Activated CD4-positive, alpha-beta T cell treated with anti-CD3 and anti-CD28 coated beads for 36 hours (primary cell): ENCODE measurements at regions of chr1 and their contacts with region 1.

Region 1: DNA sequence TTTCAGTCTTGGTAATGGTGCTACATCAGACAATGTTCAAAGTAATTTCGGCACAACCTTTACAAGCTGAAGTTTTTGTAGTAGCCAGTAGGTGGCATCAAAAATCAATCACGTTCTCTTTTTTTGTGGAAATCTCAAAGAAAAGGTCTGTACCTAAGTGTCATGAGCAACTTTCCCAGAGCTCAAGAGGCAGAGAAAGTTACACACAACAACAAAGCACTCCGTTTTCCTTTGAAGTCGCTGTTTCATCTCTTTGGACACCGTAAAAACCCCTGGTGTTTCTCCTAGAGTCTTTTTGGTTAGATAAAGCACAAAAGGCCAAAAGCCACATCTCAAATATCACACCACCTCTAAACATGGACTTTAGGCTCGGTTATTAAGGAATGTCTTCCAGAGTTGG is 131.6 kb downstream of the LHX8 start:
- DNase-seq: no peak
- ATAC-seq: peak; percentile 47
- H3K4me3 Mint-ChIP-seq: no peak overlapping the region
- H3K27ac Mint-ChIP-seq: no peak overlapping the region
- H3K4me1 Mint-ChIP-seq: no peaks in the 10 kb centered on the region
- H3K27me3 Mint-ChIP-seq: peaks cover 2% of the 10 kb centered on the region

Region 2: GRCh38 chr1:74995821-74996220 is 270.0 kb before region 1 on chr1:
- CTCF ChIA-PET with region 1: no interaction called
- POLR2A ChIA-PET with region 1: no interaction called
- intact Hi-C with region 1: no loop called
- DNase-seq: no peak
- ATAC-seq: no peak
- H3K4me3 Mint-ChIP-seq: no peak overlapping the region
- H3K27ac Mint-ChIP-seq: no peak overlapping the region
- H3K4me1 Mint-ChIP-seq: no peaks in the 10 kb centered on the region
- H3K27me3 Mint-ChIP-seq: no peaks in the 10 kb centered on the region

Region 3: DNA sequence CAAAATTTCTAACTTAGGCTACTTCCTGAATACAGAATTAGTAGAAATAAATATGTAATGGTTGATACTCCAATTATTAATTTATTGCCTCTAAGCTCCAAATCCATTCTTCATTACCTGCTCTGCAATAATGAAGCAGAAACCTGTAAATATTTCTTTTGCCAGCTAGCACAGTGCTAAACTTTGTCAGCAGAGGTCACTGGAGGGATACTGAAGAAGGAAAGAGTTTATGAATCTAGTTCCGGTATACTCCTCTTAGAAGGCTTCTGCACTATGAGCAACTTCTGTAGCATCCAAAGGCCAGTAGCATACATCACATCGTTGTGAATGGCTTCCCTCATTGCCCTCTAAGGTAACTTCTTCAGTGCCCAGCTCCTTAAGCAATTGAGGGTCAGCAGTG is 212.6 kb before region 1 on chr1:
- CTCF ChIA-PET with region 1: no interaction called
- POLR2A ChIA-PET with region 1: no interaction called
- intact Hi-C with region 1: no loop called
- DNase-seq: no peak
- ATAC-seq: no peak
- H3K4me3 Mint-ChIP-seq: no peak overlapping the region
- H3K27ac Mint-ChIP-seq: no peak overlapping the region
- H3K4me1 Mint-ChIP-seq: no peaks in the 10 kb centered on the region
- H3K27me3 Mint-ChIP-seq: no peaks in the 10 kb centered on the region

Region 4: GRCh38 chr1:75276385-75276784 is 10.6 kb after region 1 on chr1:
- CTCF ChIA-PET with region 1: interaction called, 20 read pairs
- POLR2A ChIA-PET with region 1: no interaction called
- intact Hi-C with region 1: no loop called
- DNase-seq: no peak
- ATAC-seq: no peak
- H3K4me3 Mint-ChIP-seq: no peak overlapping the region
- H3K27ac Mint-ChIP-seq: no peak overlapping the region
- H3K4me1 Mint-ChIP-seq: no peaks in the 10 kb centered on the region
- H3K27me3 Mint-ChIP-seq: no peaks in the 10 kb centered on the region